Left cardiac atrium (tissue), 4 donors: ENCODE measurements at regions of chr16 and their contacts with region 1.

Region 1: GRCh38 chr16:1194665-1195392 is 30.2 kb downstream of the TPSG1 start:
- DNase-seq: no peak
- ATAC-seq: peak; percentile 36 to 39

Region 2: GRCh38 chr16:1105888-1106620 is 88.8 kb before region 1 on chr16:
- intact Hi-C with region 1: loop called (anchors 1 to 2 kb)
- DNase-seq: peak; percentile 68
- ATAC-seq: peak; percentile 75 to 82